GM12878 (cell line): ENCODE measurements at regions of chr1 and their contacts with region 1.

Region 1: GRCh38 chr1:167273027-167273800 is 52.5 kb downstream of the POU2F1 start:
- DNase-seq: no peak
- ATAC-seq: no peak; the same call in 2 of the 3 replicates
- H3K4me3 ChIP-seq: no peak overlapping the region
- H3K27ac ChIP-seq: no peak overlapping the region
- H3K4me1 ChIP-seq: peaks cover 23% of the 10 kb centered on the region; the same call in 1 of the 2 replicates
- H3K27me3 ChIP-seq: no peaks in the 10 kb centered on the region
- CTCF ChIP-seq: no peak
- EP300 ChIP-seq: no peak
- POLR2A ChIP-seq: no peak
- RAD21 ChIP-seq: no peak

Region 2: GRCh38 chr1:167227934-167228378 is 45.3 kb before region 1 on chr1:
- CTCF ChIA-PET with region 1: interaction called, 13 read pairs
- POLR2A ChIA-PET with region 1: no interaction called
- RAD21 ChIA-PET with region 1: interaction called, 124 read pairs
- SMC1A ChIA-PET with region 1: interaction called, 5 read pairs
- in situ Hi-C with region 1: no loop called
- intact Hi-C with region 1: no loop called
- DNase-seq: no peak
- ATAC-seq: no peak
- H3K4me3 ChIP-seq: no peak overlapping the region
- H3K27ac ChIP-seq: no peak overlapping the region
- H3K4me1 ChIP-seq: peaks cover 12% of the 10 kb centered on the region; the same call in 1 of the 2 replicates
- H3K27me3 ChIP-seq: no peaks in the 10 kb centered on the region
- CTCF ChIP-seq: no peak
- EP300 ChIP-seq: no peak
- POLR2A ChIP-seq: no peak
- RAD21 ChIP-seq: no peak

Region 3: DNA sequence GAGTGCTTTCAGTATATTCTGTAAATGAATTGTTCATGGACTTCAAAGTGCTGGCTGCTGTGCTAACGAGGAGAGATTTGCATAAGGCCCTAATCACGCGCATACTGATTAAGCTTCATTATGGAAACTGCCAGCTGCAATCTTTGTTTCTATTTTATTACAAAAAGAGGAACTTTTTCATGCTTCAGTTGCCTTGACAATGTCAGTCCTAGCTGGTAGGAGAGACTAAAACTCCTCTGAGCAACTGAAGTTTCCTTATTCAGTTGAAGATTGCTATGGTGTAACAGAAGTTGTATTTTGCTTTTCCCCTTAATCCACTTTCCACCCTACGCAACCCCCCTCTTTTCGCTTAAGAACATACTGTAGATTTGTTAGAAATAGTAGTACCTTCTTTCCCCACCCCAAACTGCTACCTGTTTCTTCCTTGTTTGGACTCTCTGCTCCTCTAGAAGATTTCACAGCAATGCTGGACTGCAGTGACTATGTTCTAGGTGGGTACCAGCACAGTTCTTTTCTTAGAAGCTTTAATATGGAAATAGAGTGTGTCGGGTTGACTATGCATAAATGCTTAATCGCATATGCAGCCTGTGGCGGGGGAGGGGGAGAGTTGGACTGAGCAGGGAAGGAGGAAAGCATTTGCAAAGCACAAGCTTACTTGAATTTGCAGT is 55.7 kb after region 1 on chr1:
- CTCF ChIA-PET with region 1: interaction called, 56 read pairs
- POLR2A ChIA-PET with region 1: interaction called, 9 read pairs
- RAD21 ChIA-PET with region 1: interaction called, 53 read pairs
- SMC1A ChIA-PET with region 1: interaction called, 63 read pairs
- in situ Hi-C with region 1: no loop called
- intact Hi-C with region 1: no loop called
- DNase-seq: peak; percentile 84
- ATAC-seq: peak; percentile 77
- H3K4me3 ChIP-seq: peak overlapping the region; percentile 72
- H3K27ac ChIP-seq: peak overlapping the region; percentile 82
- H3K4me1 ChIP-seq: peaks cover 36% of the 10 kb centered on the region
- H3K27me3 ChIP-seq: no peaks in the 10 kb centered on the region
- CTCF ChIP-seq: no peak
- EP300 ChIP-seq: peak; percentile 65 to 83; a peak in 2 of 4 replicates
- POLR2A ChIP-seq: no peak
- RAD21 ChIP-seq: no peak

Region 4: DNA sequence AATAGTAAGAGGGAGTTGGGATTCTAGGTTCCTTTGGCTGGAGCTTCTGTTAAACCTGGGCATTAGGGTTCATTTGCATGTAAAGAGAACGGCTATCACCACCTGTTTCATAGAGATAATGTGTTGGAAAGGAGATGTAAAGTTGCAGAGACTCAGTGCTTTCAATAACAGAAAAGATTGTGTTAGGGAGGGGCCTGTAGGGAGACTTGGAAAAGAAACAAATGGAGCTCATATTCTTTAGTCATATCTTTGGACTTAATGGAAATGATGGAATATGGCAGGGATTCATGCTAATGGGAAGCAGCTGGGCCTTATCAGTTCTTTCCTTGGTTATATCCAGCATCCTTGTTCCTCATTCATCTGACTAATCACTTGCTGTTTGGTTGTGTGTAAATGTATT is 100.2 kb after region 1 on chr1:
- CTCF ChIA-PET with region 1: interaction called, 13 read pairs
- POLR2A ChIA-PET with region 1: no interaction called
- RAD21 ChIA-PET with region 1: no interaction called
- SMC1A ChIA-PET with region 1: interaction called, 16 read pairs
- in situ Hi-C with region 1: no loop called
- intact Hi-C with region 1: no loop called
- DNase-seq: no peak
- ATAC-seq: no peak
- H3K4me3 ChIP-seq: no peak overlapping the region
- H3K27ac ChIP-seq: no peak overlapping the region
- H3K4me1 ChIP-seq: no peaks in the 10 kb centered on the region
- H3K27me3 ChIP-seq: no peaks in the 10 kb centered on the region
- CTCF ChIP-seq: no peak
- EP300 ChIP-seq: no peak
- POLR2A ChIP-seq: no peak
- RAD21 ChIP-seq: no peak

Region 5: DNA sequence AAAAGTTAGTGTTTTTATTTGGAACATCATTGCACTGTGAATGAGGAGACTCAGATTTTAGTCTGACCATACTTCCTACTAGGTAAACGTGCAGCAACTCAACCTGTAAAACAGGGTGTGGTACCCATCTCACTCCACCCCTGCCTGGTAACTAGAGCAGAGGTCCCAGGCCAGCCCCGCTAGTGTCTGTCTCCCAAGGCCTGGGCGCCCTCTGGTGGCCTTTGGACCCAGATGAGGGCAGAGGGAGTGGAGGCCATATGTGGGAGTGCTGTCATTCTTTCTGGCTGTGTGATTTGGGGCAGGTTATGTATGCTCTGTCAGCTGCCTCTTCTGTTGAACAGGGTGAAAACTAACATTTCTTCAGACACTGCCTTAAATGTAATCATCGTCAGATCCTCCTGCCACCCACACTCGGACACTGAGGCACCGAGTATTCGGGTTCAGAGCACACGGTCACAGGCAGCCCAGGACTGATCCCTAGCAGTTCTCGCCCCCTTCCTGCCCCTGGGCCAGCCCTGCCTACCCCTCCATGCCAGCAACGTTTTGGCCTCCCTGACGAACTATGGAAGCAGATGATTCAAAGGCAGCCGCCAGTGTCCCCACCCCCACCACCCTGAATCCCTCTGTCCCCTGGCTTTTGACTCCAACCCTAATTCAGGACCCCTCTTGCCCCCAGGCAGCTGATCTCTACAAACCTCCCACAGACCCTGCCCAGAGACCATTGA is 169.1 kb after region 1 on chr1:
- CTCF ChIA-PET with region 1: interaction called, 55 read pairs
- POLR2A ChIA-PET with region 1: no interaction called
- RAD21 ChIA-PET with region 1: interaction called, 17 read pairs
- SMC1A ChIA-PET with region 1: interaction called, 43 read pairs
- in situ Hi-C with region 1: loop called (anchors 10 kb)
- intact Hi-C with region 1: no loop called
- DNase-seq: no peak
- ATAC-seq: peak; percentile 98
- H3K4me3 ChIP-seq: no peak overlapping the region
- H3K27ac ChIP-seq: no peak overlapping the region
- H3K4me1 ChIP-seq: peaks cover 8% of the 10 kb centered on the region
- H3K27me3 ChIP-seq: peaks cover 0 to 3% of the 10 kb centered on the region in 2 experiments; a peak in 1 of 4 replicates
- CTCF ChIP-seq: peak; percentile 92
- EP300 ChIP-seq: no peak
- POLR2A ChIP-seq: no peak
- RAD21 ChIP-seq: peak; percentile 98